ENCODE measurements at regions of chr5 and their contacts with region 1.

Region 1: GRCh38 chr5:151523335-151523734 is 67.8 kb downstream of the FAT2 start:
- DNase-seq: peak; percentile 62
- ATAC-seq: peak; percentile 97
- H3K4me3 Mint-ChIP-seq: no peak overlapping the region
- H3K27ac Mint-ChIP-seq: no peak overlapping the region
- H3K4me1 Mint-ChIP-seq: no peaks in the 10 kb centered on the region
- H3K27me3 Mint-ChIP-seq: no peaks in the 10 kb centered on the region
- CTCF ChIP-seq: peak; percentile 47; the same call in 1 of the 2 replicates

Region 2: DNA sequence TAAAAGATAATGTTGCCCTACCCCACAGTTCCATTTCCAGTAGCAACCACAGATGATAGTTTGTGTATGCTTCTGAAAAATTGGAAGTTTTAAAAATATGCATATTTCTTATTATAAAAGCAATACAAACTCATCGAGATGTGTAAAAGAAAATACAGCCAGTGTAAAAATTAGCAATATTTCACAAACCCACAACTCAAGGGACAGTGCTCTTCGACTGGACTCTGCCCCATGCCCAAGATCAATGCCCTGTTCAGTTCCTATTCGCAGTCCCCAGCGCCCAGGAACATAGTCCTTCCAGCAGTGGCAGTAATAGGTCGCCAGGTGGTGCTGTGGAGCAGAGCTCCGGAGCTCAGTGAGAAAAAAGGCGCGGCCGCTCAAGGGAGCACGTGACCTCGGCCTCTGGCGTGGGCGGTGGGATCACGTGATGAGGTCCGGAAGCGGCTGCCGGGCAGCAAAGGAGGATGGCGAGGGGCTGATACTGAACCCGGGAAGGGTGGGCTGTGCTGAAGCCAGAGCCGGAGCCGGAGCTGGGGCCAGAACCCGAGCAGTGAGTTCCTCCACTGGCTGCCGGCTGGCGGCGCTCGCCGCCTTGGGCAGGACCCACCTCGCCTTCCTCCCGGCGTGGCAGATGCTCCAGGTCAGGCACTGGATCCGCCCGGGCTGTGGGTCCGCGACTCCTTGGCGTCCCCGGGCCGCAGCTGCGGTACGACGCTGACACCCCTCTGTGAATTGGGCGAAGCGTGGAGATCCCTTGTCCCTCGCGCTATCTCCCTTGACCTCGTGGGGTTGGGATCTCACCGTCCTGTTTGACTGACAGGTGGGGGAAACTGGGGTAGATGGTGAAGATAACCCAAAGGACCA is 75.9 kb before region 1 on chr5 and contains the start of gene SLC36A1:
- CTCF ChIA-PET with region 1: interaction called, 26 read pairs
- POLR2A ChIA-PET with region 1: no interaction called
- DNase-seq: peak; percentile 96
- ATAC-seq: peak; percentile 87
- H3K4me3 Mint-ChIP-seq: peak within 1 kb of the TSS; percentile 94
- H3K27ac Mint-ChIP-seq: peak within 1 kb of the TSS; percentile 75
- H3K4me1 Mint-ChIP-seq: peaks cover 17% of the 10 kb centered on the region
- H3K27me3 Mint-ChIP-seq: no peaks in the 10 kb centered on the region; the same call in 1 of the 2 replicates
- CTCF ChIP-seq: peak; percentile 91
- total RNA-seq, gene SLC36A1: 12.2 to 16.0 TPM (median 13.7 TPM) in 3 replicates

Region 3: DNA sequence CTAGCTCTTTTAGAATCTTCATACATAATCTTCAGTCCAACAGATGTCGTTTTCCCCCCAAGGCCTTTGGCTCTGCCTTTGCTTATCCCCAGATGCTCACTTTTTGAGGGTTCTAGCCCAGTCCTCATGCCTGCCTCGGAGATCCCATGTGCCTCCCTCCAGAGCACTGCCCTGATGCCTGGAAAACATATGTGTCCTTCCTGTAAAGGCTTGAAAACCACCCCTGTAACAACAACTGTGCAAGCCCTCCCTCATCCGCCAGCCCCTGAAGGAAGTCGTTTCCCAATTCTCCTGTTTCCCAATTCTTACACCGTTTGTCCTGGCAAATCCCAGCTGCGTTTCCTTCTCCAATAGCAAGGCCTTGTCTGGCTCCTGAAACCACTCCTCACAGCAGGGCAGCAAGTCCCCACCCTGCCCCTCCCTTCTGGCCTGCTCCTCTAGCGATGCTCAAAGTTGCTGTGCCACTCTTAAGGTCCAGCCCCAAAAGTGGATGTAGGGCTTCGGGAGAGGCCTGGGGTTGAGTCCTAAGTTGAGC is 23.8 kb before region 1 on chr5:
- CTCF ChIA-PET with region 1: interaction called, 10 read pairs
- POLR2A ChIA-PET with region 1: no interaction called
- DNase-seq: no peak
- ATAC-seq: no peak
- H3K4me3 Mint-ChIP-seq: no peak overlapping the region
- H3K27ac Mint-ChIP-seq: peak overlapping the region; percentile 46
- H3K4me1 Mint-ChIP-seq: peaks cover 48% of the 10 kb centered on the region
- H3K27me3 Mint-ChIP-seq: no peaks in the 10 kb centered on the region
- CTCF ChIP-seq: no peak

Region 4: DNA sequence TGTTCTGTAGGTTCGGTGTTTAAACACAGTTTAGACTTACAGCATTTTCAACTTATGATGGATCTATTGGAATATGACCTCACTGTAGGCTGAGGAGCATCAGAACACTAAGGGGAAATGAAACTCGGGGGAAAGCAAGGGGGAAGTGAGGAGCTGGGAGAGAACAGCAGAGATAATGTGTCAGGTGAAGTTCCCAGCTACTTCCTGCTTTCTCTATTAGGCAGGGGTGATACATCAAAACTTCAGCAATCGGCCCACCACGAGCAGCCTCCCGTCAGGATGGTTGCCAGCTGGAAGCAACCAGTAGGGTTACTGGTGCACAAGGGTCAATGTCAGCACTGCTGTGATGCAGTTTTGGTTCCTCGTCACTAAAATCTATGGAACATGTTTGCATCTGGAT is 33.5 kb after region 1 on chr5:
- CTCF ChIA-PET with region 1: no interaction called
- POLR2A ChIA-PET with region 1: no interaction called
- DNase-seq: no peak
- ATAC-seq: no peak
- H3K4me3 Mint-ChIP-seq: no peak overlapping the region
- H3K27ac Mint-ChIP-seq: no peak overlapping the region
- H3K4me1 Mint-ChIP-seq: peaks cover 5% of the 10 kb centered on the region
- H3K27me3 Mint-ChIP-seq: no peaks in the 10 kb centered on the region
- CTCF ChIP-seq: no peak

Region 5: DNA sequence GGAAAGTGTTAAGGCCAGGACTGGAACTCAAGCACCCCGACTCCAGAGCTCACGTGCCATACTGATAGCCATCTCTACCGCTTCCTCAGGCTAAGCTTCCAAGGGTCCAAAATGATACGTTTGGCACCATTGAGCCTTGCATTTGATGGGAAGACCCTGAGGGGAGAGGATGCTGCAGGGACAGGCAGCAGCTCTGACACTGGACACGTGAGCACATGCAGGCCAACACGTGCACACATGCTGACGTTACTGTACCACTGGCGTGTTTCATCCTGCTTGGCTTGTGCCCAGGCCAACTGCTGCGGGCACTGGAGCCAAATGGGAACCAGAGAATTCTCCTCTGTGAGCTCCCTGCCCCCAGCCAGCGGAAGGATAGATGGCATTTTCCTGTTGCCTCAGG is 62.6 kb after region 1 on chr5:
- CTCF ChIA-PET with region 1: interaction called, 10 read pairs
- POLR2A ChIA-PET with region 1: no interaction called
- DNase-seq: no peak
- ATAC-seq: no peak
- H3K4me3 Mint-ChIP-seq: no peak overlapping the region
- H3K27ac Mint-ChIP-seq: no peak overlapping the region
- H3K4me1 Mint-ChIP-seq: peaks cover 23% of the 10 kb centered on the region
- H3K27me3 Mint-ChIP-seq: peaks cover 7% of the 10 kb centered on the region
- CTCF ChIP-seq: no peak

Region 6: GRCh38 chr5:151659001-151659754 is 135.8 kb after region 1 on chr5:
- CTCF ChIA-PET with region 1: interaction called, 87 read pairs
- POLR2A ChIA-PET with region 1: no interaction called
- DNase-seq: peak; percentile 94
- ATAC-seq: peak; percentile 97
- H3K4me3 Mint-ChIP-seq: no peak overlapping the region
- H3K27ac Mint-ChIP-seq: no peak overlapping the region
- H3K4me1 Mint-ChIP-seq: peaks cover 12% of the 10 kb centered on the region
- H3K27me3 Mint-ChIP-seq: no peaks in the 10 kb centered on the region
- CTCF ChIP-seq: peak; percentile 68